Naive thymus-derived CD4-positive, alpha-beta T cell (primary cell): ENCODE measurements at regions of chr11 and their contacts with region 1.

Region 1: DNA sequence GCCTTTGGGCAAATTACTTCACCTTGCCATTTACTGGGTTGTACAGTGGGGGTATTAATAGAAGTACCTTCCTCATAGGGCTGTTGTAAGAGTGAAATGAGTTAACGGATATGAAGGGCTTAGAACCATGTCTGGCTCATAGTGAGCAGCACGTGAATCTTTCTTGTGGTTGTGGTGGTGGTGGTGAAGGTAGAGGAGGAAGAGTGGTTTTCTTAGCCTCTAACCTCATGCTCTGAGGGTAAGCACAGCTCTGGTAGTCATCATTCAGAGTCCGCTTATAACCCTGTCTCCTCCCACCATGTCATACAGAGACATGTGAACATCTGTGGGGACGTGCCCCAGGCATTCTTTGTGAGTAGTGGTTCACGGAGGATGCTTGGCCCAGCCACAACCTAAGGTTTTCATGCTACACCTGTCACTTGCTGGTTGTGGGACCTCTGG is 43.6 kb downstream of the TEAD1 start:
- DNase-seq: peak in 8 of 9 donors; percentile 43 to 78 (median 76)
- ATAC-seq: peak; percentile 91
- H3K4me3 ChIP-seq: no peak overlapping the region
- H3K4me3 Mint-ChIP-seq: peak overlapping the region in 9 of 10 donors; percentile 0 to 51 (median 20)
- H3K27ac ChIP-seq: no peak overlapping the region
- H3K27ac Mint-ChIP-seq: peak overlapping the region in 5 of 9 donors; percentile 17 to 83 (median 49)
- H3K4me1 ChIP-seq: peaks cover 7 to 17% of the 10 kb centered on the region in 2 donors
- H3K4me1 Mint-ChIP-seq: peaks cover 11 to 28% (median 17%) of the 10 kb centered on the region in 7 donors
- H3K27me3 ChIP-seq: peaks cover 4 to 10% of the 10 kb centered on the region in 2 donors
- H3K27me3 Mint-ChIP-seq: peaks cover 59 to 84% (median 73%) of the 10 kb centered on the region in 5 donors

Region 2: DNA sequence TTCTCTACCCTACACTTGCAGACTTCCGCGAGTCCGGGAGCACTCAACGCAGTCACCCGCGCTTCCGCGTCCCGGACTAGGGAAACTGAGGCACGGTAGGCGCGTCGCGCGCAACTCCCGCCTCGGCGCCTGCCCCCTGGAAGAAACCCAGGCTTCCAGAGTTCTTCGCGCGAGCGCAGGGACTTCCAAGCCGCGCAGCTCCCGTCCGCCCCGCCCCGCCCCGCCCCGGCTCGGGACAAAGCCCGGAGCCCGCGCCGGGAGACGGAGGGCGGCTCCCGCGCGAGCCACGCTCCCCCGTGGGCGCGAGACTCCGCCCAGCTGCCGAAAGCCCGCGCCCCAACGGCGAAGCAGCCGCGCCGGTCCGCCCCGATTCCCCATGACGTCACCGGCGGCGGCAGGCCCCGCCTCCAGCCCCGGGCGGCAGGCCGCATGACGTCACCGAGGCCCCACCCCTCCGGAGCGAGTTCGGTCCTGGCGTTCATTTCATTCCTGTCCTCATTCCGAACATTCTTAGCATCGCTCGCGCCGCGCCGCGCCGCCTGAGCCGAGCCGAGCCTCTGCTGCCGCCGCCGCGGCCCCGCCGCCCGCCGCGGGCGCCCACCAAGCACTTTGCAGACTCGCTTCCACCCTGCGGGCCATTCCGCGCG is 43.8 kb before region 1 on chr11 and contains the start of gene TEAD1:
- CTCF ChIA-PET with region 1: no interaction called
- POLR2A ChIA-PET with region 1: no interaction called
- intact Hi-C with region 1: loop called (anchors 2 to 5 kb)
- DNase-seq: peak; percentile 74 to 97 (median 81)
- ATAC-seq: peak; percentile 89
- H3K4me3 ChIP-seq: peak within 1 kb of the TSS; percentile 70
- H3K4me3 Mint-ChIP-seq: peak within 1 kb of the TSS; percentile 80 to 91 (median 85)
- H3K27ac ChIP-seq: no peak within 1 kb of the TSS
- H3K27ac Mint-ChIP-seq: peak within 1 kb of the TSS in 4 of 9 donors; percentile 29 to 77 (median 55)
- H3K4me1 ChIP-seq: peaks cover 5 to 6% of the 10 kb centered on the region in 2 donors
- H3K4me1 Mint-ChIP-seq: peaks cover 6 to 24% (median 9%) of the 10 kb centered on the region in 7 donors
- H3K27me3 ChIP-seq: peaks cover 5 to 50% of the 10 kb centered on the region in 2 donors
- H3K27me3 Mint-ChIP-seq: peaks cover 70 to 80% (median 75%) of the 10 kb centered on the region in 5 donors
- total RNA-seq, gene TEAD1: 0.07 to 0.22 TPM in 2 of 5 experiments, not detected in the others

Region 3: DNA sequence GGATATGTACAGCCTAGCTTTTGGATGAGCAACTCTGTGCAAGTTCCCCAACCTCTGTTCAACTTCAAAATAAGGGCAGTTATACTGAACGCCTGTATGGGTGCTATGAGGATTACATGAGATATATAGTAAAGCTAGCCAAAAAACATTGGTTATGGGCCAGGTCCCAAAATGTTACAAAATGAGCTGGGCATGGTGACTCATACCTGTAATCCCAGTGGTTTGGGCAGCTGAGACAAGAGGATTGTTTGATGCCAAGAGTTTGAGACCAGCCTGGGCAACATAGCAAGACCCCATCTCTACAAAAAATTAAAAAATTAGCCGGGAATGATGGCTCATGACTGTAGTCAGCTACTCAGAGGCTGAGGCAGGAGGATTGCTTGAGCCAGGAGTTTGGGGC is 74.7 kb after region 1 on chr11:
- CTCF ChIA-PET with region 1: no interaction called
- POLR2A ChIA-PET with region 1: no interaction called
- intact Hi-C with region 1: no loop called
- DNase-seq: no peak
- ATAC-seq: no peak
- H3K4me3 ChIP-seq: no peak overlapping the region
- H3K4me3 Mint-ChIP-seq: no peak overlapping the region
- H3K27ac ChIP-seq: no peak overlapping the region
- H3K27ac Mint-ChIP-seq: no peak overlapping the region
- H3K4me1 ChIP-seq: no peaks in the 10 kb centered on the region
- H3K4me1 Mint-ChIP-seq: no peaks in the 10 kb centered on the region
- H3K27me3 ChIP-seq: no peaks in the 10 kb centered on the region
- H3K27me3 Mint-ChIP-seq: peaks cover 3 to 21% (median 4%) of the 10 kb centered on the region in 5 donors